Ovary (tissue), 10 donors: ENCODE measurements at regions of chr2 and their contacts with region 1.

Region 1: GRCh38 chr2:164903204-164903603 is 52.1 kb downstream of the SLC38A11 start:
- DNase-seq: no peak
- H3K4me3 ChIP-seq: no peak overlapping the region
- H3K27ac ChIP-seq: no peak overlapping the region
- H3K4me1 ChIP-seq: peaks cover 2% of the 10 kb centered on the region
- H3K27me3 ChIP-seq: no peaks in the 10 kb centered on the region
- CTCF ChIP-seq: no peak
- EP300 ChIP-seq: no peak
- POLR2A ChIP-seq: no peak

Region 2: DNA sequence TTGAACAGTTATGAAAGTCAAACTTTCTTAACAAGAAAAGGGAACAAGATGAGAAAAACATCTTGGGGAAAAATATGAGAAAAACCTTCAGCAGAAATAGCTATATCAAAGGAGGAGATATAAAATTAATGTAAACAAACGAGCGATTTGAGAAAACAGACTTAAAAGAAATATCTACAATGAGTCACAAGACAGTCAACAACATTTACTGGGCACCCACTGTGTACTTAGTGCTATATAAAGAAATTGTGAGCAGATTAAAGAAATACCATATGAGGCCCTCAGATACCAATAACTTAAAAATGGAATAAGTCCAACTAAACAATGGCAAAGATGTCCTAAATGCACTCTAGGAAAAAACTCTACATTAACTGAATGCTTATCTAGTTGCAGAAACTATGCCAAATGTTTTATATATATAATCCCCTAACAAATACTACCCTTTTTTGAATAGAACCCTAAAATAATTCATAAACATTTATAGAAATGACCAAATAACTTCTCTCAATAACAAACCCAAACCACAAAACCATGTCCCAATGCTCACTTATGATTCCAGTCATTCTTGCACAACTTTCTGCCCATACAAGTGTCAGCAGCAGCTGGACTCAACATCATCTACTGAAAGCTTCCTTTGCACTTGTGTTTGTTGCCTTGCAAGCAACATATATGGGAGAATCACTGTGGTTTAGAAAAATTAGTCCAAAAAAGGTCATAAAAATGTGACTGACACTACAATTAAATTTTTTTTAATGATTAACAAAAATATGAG is 145.1 kb before region 1 on chr2:
- intact Hi-C with region 1: loop called in 1 of 4 experiments (anchors 10 kb)
- DNase-seq: no peak
- H3K4me3 ChIP-seq: no peak overlapping the region
- H3K27ac ChIP-seq: peak overlapping the region in 1 of 2 donors; percentile 20
- H3K4me1 ChIP-seq: peaks cover 6% of the 10 kb centered on the region
- H3K27me3 ChIP-seq: no peaks in the 10 kb centered on the region
- CTCF ChIP-seq: no peak
- EP300 ChIP-seq: no peak
- POLR2A ChIP-seq: no peak

Region 3: GRCh38 chr2:165401285-165401852 is 498.2 kb after region 1 on chr2:
- intact Hi-C with region 1: no loop called
- DNase-seq: peak in 1 of 5 donors; percentile 30
- H3K4me3 ChIP-seq: no peak overlapping the region
- H3K27ac ChIP-seq: no peak overlapping the region
- H3K4me1 ChIP-seq: no peaks in the 10 kb centered on the region
- H3K27me3 ChIP-seq: no peaks in the 10 kb centered on the region
- CTCF ChIP-seq: peak; percentile 28 to 75 (median 70)
- EP300 ChIP-seq: no peak
- POLR2A ChIP-seq: no peak